Activated T-helper 2 cell treated with anti-CD3 and anti-CD28 coated beads, Interferon-gamma antibody, Interleukin-2, Interleukin-4, amounts not matched to agents 10 μg/mL and 5 μg/mL and 100 μg/mL, durations not matched to agents 14 hours and 24 hours and 36 hours (primary cell): ENCODE measurements at regions of chr22 and their contacts with region 1.

Region 1: GRCh38 chr22:40055143-40055883 is 60.6 kb downstream of the FAM83F start:
- DNase-seq: no peak
- H3K4me3 Mint-ChIP-seq: peak overlapping the region; percentile 68
- H3K27ac Mint-ChIP-seq: peak overlapping the region; percentile 92
- H3K4me1 Mint-ChIP-seq: peaks cover 65% of the 10 kb centered on the region
- H3K27me3 Mint-ChIP-seq: no peaks in the 10 kb centered on the region

Region 2: GRCh38 chr22:39946503-39947219 is 108.7 kb before region 1 on chr22:
- intact Hi-C with region 1: no loop called
- DNase-seq: no peak
- H3K4me3 Mint-ChIP-seq: no peak overlapping the region
- H3K27ac Mint-ChIP-seq: no peak overlapping the region
- H3K4me1 Mint-ChIP-seq: peaks cover 84% of the 10 kb centered on the region
- H3K27me3 Mint-ChIP-seq: no peaks in the 10 kb centered on the region

Region 3: GRCh38 chr22:40107851-40108378 is 52.6 kb after region 1 on chr22:
- intact Hi-C with region 1: loop called (anchors 2 kb)
- DNase-seq: peak; percentile 25
- H3K4me3 Mint-ChIP-seq: peak overlapping the region; percentile 76
- H3K27ac Mint-ChIP-seq: peak overlapping the region; percentile 84
- H3K4me1 Mint-ChIP-seq: peaks cover 47% of the 10 kb centered on the region
- H3K27me3 Mint-ChIP-seq: no peaks in the 10 kb centered on the region

Region 4: DNA sequence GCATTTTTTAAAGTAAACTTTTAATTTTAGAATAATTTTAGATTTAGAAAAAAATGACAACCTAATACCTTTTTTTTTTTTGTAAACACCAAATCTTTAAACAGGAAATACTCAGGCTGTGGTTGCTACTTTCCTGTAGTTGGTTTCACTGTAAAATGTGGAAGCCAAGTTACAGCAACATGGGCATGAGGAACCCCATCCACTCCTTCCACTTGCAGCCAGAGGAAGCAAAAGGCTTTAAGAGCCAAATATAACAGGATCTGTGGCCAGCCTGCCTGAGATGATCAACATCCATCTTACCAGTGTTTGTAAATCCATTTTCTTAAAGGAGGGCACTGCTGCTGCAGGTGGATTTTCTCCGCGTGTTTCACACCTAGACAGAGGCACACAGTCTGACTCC is 188.6 kb after region 1 on chr22:
- intact Hi-C with region 1: loop called (anchors 5 kb)
- DNase-seq: no peak
- H3K4me3 Mint-ChIP-seq: peak overlapping the region; percentile 21
- H3K27ac Mint-ChIP-seq: peak overlapping the region; percentile 17
- H3K4me1 Mint-ChIP-seq: peaks cover 64% of the 10 kb centered on the region
- H3K27me3 Mint-ChIP-seq: no peaks in the 10 kb centered on the region

Region 5: GRCh38 chr22:40276996-40277823 is 221.9 kb after region 1 on chr22:
- intact Hi-C with region 1: loop called (anchors 1 kb)
- DNase-seq: no peak
- H3K4me3 Mint-ChIP-seq: no peak overlapping the region
- H3K27ac Mint-ChIP-seq: no peak overlapping the region
- H3K4me1 Mint-ChIP-seq: peaks cover 19% of the 10 kb centered on the region
- H3K27me3 Mint-ChIP-seq: no peaks in the 10 kb centered on the region